Activated CD4-positive, alpha-beta memory T cell treated with anti-CD3 and anti-CD28 coated beads for 36 hours (primary cell): ENCODE measurements at regions of chr4 and their contacts with region 1.

Region 1: DNA sequence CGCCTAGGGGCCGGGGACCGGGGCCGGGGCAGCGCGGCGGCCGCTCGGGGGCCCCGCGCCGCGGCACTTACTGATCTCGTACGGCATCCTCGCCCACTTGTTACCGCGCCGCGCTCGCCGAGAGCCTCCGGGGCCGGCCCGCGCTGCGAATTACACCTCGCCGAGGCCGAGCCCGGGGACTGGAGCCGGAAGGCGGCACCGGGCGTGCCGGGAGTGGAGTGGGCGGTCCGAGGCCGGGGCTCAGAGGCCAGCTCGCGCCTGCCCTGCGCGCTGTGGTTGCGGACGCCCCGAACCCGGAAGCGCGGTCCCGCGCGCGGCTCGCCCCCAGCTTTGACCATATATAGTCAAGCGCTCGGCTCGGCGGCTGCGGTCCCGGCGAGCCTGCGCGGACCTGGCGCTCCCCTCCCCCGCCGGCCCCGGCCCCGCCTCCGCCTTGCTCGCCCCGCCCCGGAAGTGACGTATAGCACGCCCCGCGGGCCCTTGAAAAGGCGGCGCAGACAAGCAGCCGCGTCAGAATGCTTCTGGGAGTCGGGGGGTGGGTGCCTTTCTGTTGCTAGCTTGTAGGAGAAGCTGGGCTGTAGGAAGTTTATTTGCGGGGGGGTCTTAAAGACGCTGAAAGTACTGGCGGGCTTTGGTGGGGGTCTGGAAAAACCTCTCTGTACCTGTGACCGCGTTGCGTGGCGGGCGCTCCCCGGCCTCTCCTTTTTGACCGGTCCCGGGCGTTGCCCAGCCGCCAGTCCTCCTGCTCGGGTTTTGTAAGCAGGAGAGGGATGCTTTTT is at the start of gene WDR1:
- DNase-seq: peak; percentile 96
- H3K4me3 Mint-ChIP-seq: peak within 1 kb of the TSS; percentile 94
- H3K27ac Mint-ChIP-seq: peak within 1 kb of the TSS; percentile 97
- H3K4me1 Mint-ChIP-seq: peaks cover 57% of the 10 kb centered on the region
- H3K27me3 Mint-ChIP-seq: no peaks in the 10 kb centered on the region
- total RNA-seq, gene WDR1: 351 to 353 TPM

Region 2: GRCh38 chr4:9608300-9608699 is 508.5 kb before region 1 on chr4:
- CTCF ChIA-PET with region 1: no interaction called
- POLR2A ChIA-PET with region 1: no interaction called
- intact Hi-C with region 1: loop called (anchors 10 kb)
- DNase-seq: peak; percentile 11
- H3K4me3 Mint-ChIP-seq: no peak overlapping the region
- H3K27ac Mint-ChIP-seq: no peak overlapping the region
- H3K4me1 Mint-ChIP-seq: peaks cover 41% of the 10 kb centered on the region
- H3K27me3 Mint-ChIP-seq: no peaks in the 10 kb centered on the region

Region 3: GRCh38 chr4:10018818-10019461 is 97.8 kb before region 1 on chr4:
- CTCF ChIA-PET with region 1: interaction called, 5 read pairs
- POLR2A ChIA-PET with region 1: interaction called, 3 read pairs
- intact Hi-C with region 1: loop called (anchors 2 kb)
- DNase-seq: peak; percentile 96
- H3K4me3 Mint-ChIP-seq: peak overlapping the region; percentile 86
- H3K27ac Mint-ChIP-seq: peak overlapping the region; percentile 88
- H3K4me1 Mint-ChIP-seq: peaks cover 10% of the 10 kb centered on the region
- H3K27me3 Mint-ChIP-seq: no peaks in the 10 kb centered on the region

Region 4: GRCh38 chr4:10054571-10055041 is 62.2 kb before region 1 on chr4:
- CTCF ChIA-PET with region 1: no interaction called
- POLR2A ChIA-PET with region 1: no interaction called
- intact Hi-C with region 1: no loop called
- DNase-seq: no peak
- H3K4me3 Mint-ChIP-seq: no peak overlapping the region
- H3K27ac Mint-ChIP-seq: no peak overlapping the region
- H3K4me1 Mint-ChIP-seq: no peaks in the 10 kb centered on the region
- H3K27me3 Mint-ChIP-seq: no peaks in the 10 kb centered on the region

Region 5: GRCh38 chr4:10106421-10107039 is 10.2 kb before region 1 on chr4:
- CTCF ChIA-PET with region 1: interaction called, 9 read pairs
- POLR2A ChIA-PET with region 1: interaction called, 80 read pairs
- intact Hi-C with region 1: loop called (anchors 1 kb)
- DNase-seq: peak; percentile 90
- H3K4me3 Mint-ChIP-seq: peak overlapping the region; percentile 66
- H3K27ac Mint-ChIP-seq: peak overlapping the region; percentile 86
- H3K4me1 Mint-ChIP-seq: peaks cover 98% of the 10 kb centered on the region
- H3K27me3 Mint-ChIP-seq: no peaks in the 10 kb centered on the region

Region 6: DNA sequence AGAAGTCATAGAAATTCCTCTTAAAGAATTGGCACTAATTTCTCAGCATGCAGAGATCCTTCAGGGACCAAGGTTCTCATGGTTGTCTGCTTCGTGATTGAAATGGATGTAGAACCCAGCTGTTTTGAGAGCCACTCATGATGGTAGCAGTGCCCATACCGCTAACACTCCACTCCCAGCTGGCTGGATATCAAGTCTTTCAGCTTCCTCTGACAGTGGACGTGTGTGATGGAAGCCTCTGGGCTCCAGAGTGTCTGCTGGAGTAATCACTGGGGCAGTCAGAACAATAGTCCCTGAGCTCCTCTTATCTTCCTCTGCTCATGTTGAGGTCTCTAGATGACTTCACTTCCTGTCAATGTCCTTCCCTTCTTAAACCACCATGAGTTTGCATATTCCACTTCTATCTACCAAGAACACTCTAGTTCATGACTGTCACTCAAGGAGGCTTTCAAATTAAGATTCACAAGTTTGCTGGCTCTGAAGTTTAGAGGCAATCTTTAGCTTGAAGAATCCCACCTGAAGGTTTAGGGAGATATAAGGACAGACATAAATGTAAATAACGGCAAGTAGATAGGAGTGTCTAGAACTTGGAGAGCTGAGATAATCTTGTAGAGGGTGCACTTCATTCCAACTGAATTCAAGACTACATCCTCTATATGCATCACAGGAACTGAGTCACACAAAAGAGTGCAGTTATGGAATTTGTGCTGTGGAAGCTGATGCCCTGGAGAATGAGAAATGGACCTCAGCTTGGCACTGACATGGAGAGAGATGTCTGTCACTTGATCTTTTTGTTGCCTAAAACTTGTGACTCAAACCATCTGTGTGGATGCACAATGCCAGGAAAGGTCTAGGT is 64.4 kb after region 1 on chr4:
- CTCF ChIA-PET with region 1: interaction called, 4 read pairs
- POLR2A ChIA-PET with region 1: no interaction called
- intact Hi-C with region 1: loop called (anchors 1 kb)
- DNase-seq: peak; percentile 63
- H3K4me3 Mint-ChIP-seq: no peak overlapping the region
- H3K27ac Mint-ChIP-seq: peak overlapping the region; percentile 88
- H3K4me1 Mint-ChIP-seq: peaks cover 34% of the 10 kb centered on the region
- H3K27me3 Mint-ChIP-seq: no peaks in the 10 kb centered on the region

Region 7: GRCh38 chr4:11149612-11150259 is 1033.0 kb after region 1 on chr4:
- CTCF ChIA-PET with region 1: no interaction called
- POLR2A ChIA-PET with region 1: no interaction called
- intact Hi-C with region 1: no loop called
- DNase-seq: no peak
- H3K4me3 Mint-ChIP-seq: no peak overlapping the region
- H3K27ac Mint-ChIP-seq: no peak overlapping the region
- H3K4me1 Mint-ChIP-seq: no peaks in the 10 kb centered on the region
- H3K27me3 Mint-ChIP-seq: no peaks in the 10 kb centered on the region